ENCODE measurements at regions of chr3 and their contacts with region 1.

Region 1: DNA sequence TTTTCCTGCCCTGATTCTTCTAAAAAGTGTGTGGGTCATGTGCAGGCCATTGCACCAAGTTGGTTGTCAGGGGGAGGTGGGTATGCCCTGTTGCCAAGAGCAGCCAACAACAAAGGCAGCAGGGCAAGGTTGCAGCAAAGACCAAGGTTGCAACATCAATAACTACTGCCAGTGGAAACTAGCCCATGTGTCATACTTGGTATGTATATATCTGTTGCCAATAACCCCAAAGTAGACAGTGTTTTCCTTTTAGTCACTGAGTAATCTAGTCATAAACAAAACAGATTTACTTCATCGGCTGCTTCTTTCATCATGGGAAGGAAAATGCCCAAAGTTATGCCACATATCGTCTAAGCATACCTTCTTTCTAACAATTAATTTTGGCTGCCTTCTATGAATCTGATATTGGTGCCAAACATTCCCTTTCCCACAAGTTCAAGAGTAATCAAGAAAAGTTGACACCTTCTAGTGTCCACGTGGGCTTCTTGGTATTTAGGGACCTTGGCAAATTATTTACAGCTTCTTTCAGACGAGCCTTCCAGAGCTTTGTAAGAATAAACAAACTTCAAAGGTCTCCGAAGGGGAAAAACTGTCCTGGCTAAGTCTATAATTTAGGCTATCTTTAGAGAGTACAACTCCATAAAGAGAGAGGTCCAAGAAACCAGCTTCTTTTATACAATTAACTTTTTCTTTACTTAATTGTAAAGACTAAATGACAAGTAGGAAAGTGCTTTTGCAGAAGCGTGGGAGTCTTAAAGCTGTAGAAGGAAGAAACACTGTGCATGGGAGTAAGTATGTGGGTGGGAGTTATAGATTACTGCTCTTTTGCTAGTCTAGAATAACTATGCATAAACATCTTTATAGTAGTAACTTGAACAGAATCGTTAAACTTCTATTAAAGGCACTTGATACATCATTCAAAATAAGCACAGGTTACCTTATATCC is 10.0 kb upstream of the MBNL1 start:
- DNase-seq: peak; percentile 82
- ATAC-seq: peak; percentile 76
- H3K4me3 Mint-ChIP-seq: peak overlapping the region; percentile 66
- H3K27ac Mint-ChIP-seq: peak overlapping the region; percentile 96
- H3K4me1 Mint-ChIP-seq: peaks cover 82% of the 10 kb centered on the region
- H3K27me3 Mint-ChIP-seq: no peaks in the 10 kb centered on the region
- CTCF ChIP-seq: no peak

Region 2: GRCh38 chr3:152030320-152030719 is 228.4 kb before region 1 on chr3:
- CTCF ChIA-PET with region 1: no interaction called
- POLR2A ChIA-PET with region 1: no interaction called
- intact Hi-C with region 1: no loop called
- DNase-seq: no peak
- ATAC-seq: no peak
- H3K4me3 Mint-ChIP-seq: no peak overlapping the region
- H3K27ac Mint-ChIP-seq: no peak overlapping the region
- H3K4me1 Mint-ChIP-seq: no peaks in the 10 kb centered on the region
- H3K27me3 Mint-ChIP-seq: no peaks in the 10 kb centered on the region
- CTCF ChIP-seq: no peak

Region 3: GRCh38 chr3:152241142-152242017 is 17.3 kb before region 1 on chr3:
- CTCF ChIA-PET with region 1: interaction called, 23 read pairs
- POLR2A ChIA-PET with region 1: interaction called, 62 read pairs
- intact Hi-C with region 1: loop called (anchors 2 kb)
- DNase-seq: peak; percentile 54
- ATAC-seq: peak; percentile 62
- H3K4me3 Mint-ChIP-seq: peak overlapping the region; percentile 47
- H3K27ac Mint-ChIP-seq: peak overlapping the region; percentile 93
- H3K4me1 Mint-ChIP-seq: peaks cover 58% of the 10 kb centered on the region
- H3K27me3 Mint-ChIP-seq: no peaks in the 10 kb centered on the region
- CTCF ChIP-seq: no peak

Measured in activated CD8-positive, alpha-beta T cell treated with anti-CD3 and anti-CD28 coated beads for 36 hours (primary cell).